ENCODE measurements at regions of chr6 and their contacts with region 1.

Region 1: DNA sequence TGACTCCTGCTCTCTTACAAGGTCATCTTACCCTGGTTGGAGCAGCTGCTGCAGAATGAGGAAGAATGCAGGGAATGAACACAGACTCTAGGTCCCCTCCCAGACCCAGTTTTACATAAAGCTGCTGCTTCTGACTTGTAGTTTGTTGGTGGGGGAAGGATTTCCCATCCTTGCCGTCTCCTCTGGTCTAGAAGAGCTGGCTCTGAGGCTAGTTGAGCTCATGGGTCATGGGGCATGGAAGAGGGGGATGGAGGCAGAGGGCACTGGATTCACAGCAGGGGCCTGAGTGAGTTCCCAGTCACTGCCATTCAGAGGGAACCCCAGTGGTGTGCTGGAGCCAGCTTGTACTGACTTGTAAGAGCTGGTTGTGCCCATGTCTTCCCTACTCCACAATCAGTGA is 9.2 kb upstream of the GUCA1A start:
- DNase-seq: peak in 3 of 5 donors; percentile 33 to 84 (median 44)
- H3K4me3 ChIP-seq: no peak overlapping the region
- H3K27ac ChIP-seq: no peak overlapping the region
- H3K4me1 ChIP-seq: no peaks in the 10 kb centered on the region
- H3K27me3 ChIP-seq: no peaks in the 10 kb centered on the region
- CTCF ChIP-seq: no peak

Region 2: DNA sequence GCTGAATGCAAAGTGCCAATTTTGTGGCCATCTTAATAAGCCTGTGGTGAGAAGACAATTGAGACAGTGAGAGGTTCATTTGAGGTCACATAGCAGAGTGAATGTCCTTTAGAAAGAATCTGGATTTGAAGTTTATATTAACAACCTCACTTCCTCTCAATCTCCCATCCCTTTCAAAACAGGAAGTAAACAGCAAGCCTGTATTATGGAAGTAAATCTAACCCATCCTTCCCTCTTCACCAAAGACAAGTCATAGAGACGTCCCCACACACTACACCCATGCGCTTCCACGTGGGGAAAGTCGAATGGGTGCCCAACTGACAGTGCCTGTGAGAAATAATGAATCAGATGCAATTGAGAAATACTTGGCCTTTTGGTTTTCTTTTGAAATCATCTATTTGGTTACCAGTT is 193.5 kb before region 1 on chr6:
- intact Hi-C with region 1: no loop called
- DNase-seq: peak in 1 of 5 donors; percentile 7
- H3K4me3 ChIP-seq: no peak overlapping the region
- H3K27ac ChIP-seq: no peak overlapping the region
- H3K4me1 ChIP-seq: peaks cover 0 to 9% (median 0%) of the 10 kb centered on the region in 3 donors
- H3K27me3 ChIP-seq: no peaks in the 10 kb centered on the region
- CTCF ChIP-seq: no peak

Region 3: GRCh38 chr6:41996997-41997396 is 167.0 kb before region 1 on chr6:
- intact Hi-C with region 1: no loop called
- DNase-seq: no peak
- H3K4me3 ChIP-seq: no peak overlapping the region
- H3K27ac ChIP-seq: no peak overlapping the region
- H3K4me1 ChIP-seq: no peaks in the 10 kb centered on the region
- H3K27me3 ChIP-seq: no peaks in the 10 kb centered on the region
- CTCF ChIP-seq: no peak

Region 4: DNA sequence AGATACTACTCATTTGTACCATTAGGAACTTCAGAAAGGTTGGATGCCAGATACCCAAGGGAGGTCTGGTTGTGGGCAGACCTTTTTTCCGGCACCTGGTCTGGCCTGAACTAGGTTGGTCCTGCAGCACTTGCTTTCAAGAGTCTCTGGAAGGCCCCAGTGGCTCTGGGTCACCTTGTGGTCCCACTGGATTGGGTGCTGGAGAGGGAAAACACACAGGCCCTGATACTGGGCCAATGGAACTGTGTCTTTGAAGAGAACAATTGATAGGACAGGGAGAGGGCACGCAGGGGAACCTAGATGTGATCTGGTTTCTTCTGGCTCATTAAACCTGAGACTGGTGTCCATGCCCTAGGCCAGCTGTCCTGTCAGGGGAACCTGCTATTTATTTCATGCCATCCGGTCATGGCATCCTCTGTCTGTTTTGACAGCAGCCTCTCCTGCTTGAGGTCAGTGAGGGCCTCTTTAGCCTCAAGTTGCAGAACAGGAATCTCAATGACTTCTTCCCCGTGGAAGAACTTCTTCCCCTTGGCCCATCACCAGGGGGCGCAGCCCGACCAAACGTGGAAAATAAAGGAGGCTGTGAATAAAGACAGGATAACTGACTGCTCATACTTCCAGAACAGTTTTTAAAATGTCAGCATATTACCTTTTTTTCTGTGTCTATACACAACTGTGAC is 88.7 kb before region 1 on chr6:
- intact Hi-C with region 1: loop called (anchors 5 kb)
- DNase-seq: peak; percentile 91 to 93 (median 92)
- H3K4me3 ChIP-seq: no peak overlapping the region
- H3K27ac ChIP-seq: no peak overlapping the region
- H3K4me1 ChIP-seq: no peaks in the 10 kb centered on the region
- H3K27me3 ChIP-seq: no peaks in the 10 kb centered on the region
- CTCF ChIP-seq: peak; percentile 86

Measured in kidney (tissue), 22 donors.